Motor neuron (in vitro differentiated cells): ENCODE measurements at regions of chr1 and their contacts with region 1.

Region 1: DNA sequence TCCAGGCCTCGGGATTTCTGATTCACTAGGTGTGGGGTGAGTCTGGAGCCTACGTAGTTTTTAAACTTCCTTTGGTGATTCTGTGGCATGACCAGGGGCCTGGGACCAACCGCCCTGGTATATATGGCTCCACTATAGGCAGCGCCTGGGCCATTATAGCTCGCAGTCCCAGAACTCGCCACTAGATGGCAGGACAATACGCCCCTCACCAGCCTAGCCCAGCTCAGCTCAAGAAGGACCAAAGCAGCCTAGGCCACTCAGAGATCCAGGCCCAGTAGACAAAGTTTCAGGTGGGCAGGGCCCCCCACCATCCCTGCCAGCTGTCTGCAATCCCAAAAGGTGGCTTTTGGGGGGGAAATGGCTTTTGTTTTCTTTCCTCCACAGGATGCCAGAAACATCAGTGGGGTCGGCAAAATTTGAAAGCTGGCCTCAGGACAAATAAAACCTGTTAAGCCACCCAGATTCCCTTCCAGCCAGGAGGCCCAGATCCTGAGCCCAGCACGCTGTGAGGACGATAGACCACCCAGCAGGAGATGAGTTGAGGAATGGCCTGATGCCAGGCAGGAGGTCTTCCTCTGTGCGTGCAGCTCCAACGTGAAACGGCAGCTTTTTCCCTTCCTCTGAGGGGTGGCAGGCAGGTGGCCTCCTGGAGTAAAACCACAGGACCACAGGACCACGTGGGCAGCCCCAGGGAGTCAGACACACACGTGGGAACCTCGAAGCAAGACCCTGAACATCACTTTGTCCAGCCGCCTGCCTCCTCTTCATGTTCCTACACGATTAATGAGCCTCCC is 24.8 kb upstream of the TMEM51 start:
- ATAC-seq: peak; percentile 94 to 100 (median 96)
- H3K4me3 ChIP-seq: no peak overlapping the region
- H3K27ac ChIP-seq: no peak overlapping the region
- H3K4me1 ChIP-seq: no peaks in the 10 kb centered on the region

Region 2: GRCh38 chr1:15272009-15272788 is 143.5 kb after region 1 on chr1:
- in situ Hi-C with region 1: loop called in 2 of 9 experiments (anchors 25 kb)
- ATAC-seq: peak; percentile 94 to 99 (median 99)
- H3K4me3 ChIP-seq: no peak overlapping the region
- H3K27ac ChIP-seq: no peak overlapping the region
- H3K4me1 ChIP-seq: peaks cover 5 to 6% of the 10 kb centered on the region in 2 donors

Region 3: DNA sequence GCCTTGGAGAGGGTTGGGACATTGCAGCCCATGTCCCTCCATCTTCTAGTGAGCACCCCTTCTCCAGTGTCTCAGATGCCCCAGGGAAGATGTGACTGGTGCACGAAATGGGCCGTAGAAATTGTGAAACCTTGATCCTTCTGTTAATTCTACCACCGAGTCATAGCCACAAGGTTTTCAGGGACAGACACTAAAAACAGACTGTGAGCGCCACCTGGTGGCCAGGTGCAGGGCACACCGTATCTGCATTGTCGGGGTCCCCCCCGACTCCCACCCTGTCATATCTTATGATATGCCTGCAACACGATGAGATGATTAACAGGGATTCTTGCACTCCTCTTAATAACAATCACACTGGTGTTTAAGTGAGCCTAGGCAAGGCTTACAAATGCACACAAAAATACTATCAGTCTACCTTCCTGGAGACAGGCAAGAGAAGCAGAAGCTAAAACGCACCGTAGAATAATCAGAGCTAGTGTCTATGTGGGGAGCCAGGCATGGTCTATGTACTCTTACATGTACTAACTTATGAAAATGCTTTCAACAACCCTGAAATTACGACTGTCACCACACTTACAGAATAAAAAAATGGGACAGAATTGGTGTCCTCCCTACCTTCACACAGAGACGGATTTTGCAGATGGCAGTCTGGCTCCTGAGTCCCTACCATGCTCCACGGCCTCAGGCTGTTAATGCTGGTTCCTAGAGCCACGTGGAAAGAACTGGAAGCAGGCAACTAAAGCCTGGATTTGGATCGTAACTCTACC is 176.2 kb after region 1 on chr1:
- in situ Hi-C with region 1: loop called in 1 of 9 experiments (anchors 10 kb)
- ATAC-seq: peak; percentile 58 to 91 (median 72)
- H3K4me3 ChIP-seq: no peak overlapping the region
- H3K27ac ChIP-seq: no peak overlapping the region
- H3K4me1 ChIP-seq: peaks cover 0 to 13% of the 10 kb centered on the region in 2 donors

Region 4: DNA sequence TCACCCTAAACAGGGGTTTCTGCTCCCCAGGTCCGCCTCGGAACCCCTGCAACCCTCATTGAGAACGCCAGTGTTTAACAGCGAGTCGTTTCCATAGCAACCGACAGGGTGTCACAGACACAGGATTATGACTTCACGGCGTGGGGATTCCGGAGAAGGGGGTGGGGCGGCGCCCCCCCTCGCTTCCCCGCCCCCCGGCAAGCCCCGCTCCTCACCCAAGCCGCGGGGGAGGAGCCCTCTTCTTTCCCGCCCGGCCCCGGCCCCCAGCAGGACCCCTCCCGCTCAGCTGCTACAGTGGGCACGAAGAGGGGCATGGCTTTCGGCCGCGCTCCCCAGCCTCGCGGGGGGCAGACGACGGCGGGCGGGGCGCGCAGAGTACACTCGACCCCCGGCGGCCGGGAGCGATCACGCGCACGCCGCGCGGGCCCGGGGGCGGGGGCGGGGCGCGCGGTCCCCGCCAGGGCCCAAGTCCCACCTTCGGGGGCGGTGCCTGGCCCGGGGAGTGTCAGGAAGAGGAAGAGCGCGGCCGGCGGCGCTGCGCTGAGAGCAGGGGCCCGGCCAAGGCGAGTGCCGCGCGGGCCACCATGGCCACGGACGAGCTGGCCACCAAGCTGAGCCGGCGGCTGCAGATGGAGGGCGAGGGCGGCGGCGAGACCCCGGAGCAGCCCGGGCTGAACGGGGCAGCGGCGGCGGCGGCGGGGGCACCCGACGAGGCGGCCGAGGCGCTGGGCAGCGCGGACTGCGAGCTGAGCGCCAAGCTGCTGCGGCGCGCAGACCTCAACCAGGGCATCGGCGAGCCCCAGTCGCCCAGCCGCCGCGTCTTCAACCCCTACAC is 280.9 kb after region 1 on chr1 and contains the start of gene EFHD2:
- in situ Hi-C with region 1: loop called in 1 of 9 experiments (anchors 25 kb)
- ATAC-seq: peak; percentile 74 to 93 (median 86)
- H3K4me3 ChIP-seq: peak within 1 kb of the TSS; percentile 64 to 92 (median 87)
- H3K27ac ChIP-seq: peak within 1 kb of the TSS; percentile 28 to 62
- H3K4me1 ChIP-seq: peaks cover 27 to 28% of the 10 kb centered on the region in 2 donors
- total RNA-seq, gene EFHD2: 9.1 to 67.9 (median 14.4) TPM

Region 5: DNA sequence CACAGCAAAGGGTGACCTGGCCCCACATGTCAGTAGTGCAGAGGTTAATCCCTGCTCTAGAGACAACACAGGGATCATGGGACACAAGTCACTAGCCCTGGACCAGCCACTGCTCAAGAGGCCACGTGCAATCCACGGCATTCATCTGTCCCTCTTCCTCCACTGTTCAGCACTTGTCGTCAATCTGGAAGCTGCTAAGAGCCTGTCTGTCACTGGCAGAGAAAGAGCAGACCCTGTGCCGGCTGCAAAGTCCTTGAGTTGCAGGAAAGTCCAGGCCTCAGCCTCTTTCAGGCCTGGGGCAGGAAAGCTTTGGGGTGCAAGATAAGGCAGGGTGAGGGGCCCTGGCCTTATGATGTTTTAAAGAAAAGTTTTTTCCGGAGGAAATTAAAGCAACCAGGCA is 363.9 kb after region 1 on chr1:
- in situ Hi-C with region 1: no loop called
- ATAC-seq: no peak
- H3K4me3 ChIP-seq: no peak overlapping the region
- H3K27ac ChIP-seq: no peak overlapping the region
- H3K4me1 ChIP-seq: no peaks in the 10 kb centered on the region